PC-3 (cell line): ENCODE measurements at regions of chr5 and their contacts with region 1.

Region 1: GRCh38 chr5:34582371-34582770 is 73.8 kb upstream of the RAI14 start:
- DNase-seq: no peak
- ATAC-seq: no peak
- H3K4me3 ChIP-seq: no peak overlapping the region
- H3K27ac ChIP-seq: peak overlapping the region; percentile 99; the same call in 1 of the 2 replicates
- H3K4me1 ChIP-seq: peaks cover 51% of the 10 kb centered on the region
- H3K27me3 ChIP-seq: no peaks in the 10 kb centered on the region
- CTCF ChIP-seq: no peak

Region 2: DNA sequence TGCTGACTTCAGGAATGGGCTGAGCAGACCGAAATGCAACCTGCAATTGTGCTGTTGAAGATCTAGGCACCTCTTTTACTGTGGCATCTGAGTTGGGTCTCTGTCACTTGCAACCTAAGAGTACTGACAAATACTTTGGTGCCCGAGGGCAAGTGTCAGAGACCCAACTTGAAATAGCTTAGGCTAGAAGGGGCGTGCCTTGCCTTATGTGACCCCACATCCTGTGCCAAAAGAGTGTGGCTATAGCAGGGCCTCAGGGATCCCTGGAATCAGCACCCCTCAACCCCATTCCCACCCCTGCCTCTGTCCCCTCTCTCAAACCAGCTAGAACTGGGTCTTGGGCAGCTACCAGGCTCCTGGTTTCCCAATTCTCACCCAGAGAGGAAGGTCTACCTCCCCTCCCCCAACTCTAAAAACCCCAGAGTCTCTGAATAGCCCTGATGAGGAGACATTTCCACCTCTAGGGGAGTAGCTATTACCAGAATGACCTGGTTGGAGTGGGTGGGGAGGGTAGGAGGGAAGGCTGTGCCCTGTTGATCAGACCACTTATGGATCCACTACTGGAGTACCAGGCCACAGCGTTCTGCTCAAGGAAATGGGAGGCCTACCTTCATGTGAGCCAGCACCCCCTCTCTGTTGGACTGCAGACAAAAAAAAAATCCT is 91.2 kb after region 1 on chr5:
- CTCF ChIA-PET with region 1: no interaction called
- POLR2A ChIA-PET with region 1: interaction called, 13 read pairs
- intact Hi-C with region 1: no loop called
- DNase-seq: peak; percentile 11
- ATAC-seq: peak; percentile 12; the same call in 1 of the 2 replicates
- H3K4me3 ChIP-seq: no peak overlapping the region
- H3K27ac ChIP-seq: peak overlapping the region; percentile 69
- H3K4me1 ChIP-seq: peaks cover 38% of the 10 kb centered on the region
- H3K27me3 ChIP-seq: no peaks in the 10 kb centered on the region
- CTCF ChIP-seq: no peak

Region 3: DNA sequence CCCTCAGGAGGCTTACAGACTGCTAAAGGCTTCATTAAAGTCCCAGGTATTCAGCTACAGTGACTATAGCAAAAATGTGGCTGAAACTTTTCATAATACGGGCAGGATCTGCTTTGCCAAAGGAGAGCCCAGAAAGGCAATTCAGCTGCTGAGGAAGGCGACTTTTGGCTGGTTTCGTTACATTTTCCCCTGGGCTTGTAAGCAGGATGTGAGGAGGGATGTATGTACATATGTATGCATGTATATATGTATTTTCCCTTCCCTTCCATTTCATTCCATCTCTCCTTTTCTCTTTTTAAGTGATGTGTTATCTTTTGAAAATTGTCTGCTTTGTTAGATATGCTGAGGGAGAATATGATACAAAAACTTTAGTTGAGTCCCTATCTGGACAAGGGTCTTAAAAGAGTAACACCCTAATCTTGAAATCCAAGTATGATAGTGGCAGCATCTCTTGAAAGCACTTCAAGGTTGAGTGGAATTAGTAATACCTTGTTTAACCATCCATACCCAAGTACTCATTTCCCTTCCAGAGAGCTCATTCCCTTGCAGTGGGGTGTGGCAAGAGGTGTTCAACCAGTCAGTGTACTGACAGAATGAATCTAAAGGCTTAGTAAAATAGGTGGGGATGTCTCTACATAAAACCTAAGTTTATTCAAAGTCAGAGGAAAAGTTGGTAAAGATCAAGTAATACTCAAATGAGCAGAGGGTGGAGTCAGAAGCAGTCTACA is 304.2 kb after region 1 on chr5:
- CTCF ChIA-PET with region 1: no interaction called
- POLR2A ChIA-PET with region 1: interaction called, 12 read pairs
- intact Hi-C with region 1: no loop called
- DNase-seq: no peak
- ATAC-seq: no peak
- H3K4me3 ChIP-seq: no peak overlapping the region
- H3K27ac ChIP-seq: no peak overlapping the region
- H3K4me1 ChIP-seq: no peaks in the 10 kb centered on the region
- H3K27me3 ChIP-seq: no peaks in the 10 kb centered on the region
- CTCF ChIP-seq: no peak